ENCODE measurements at regions of chr11 and their contacts with region 1.

Region 1: GRCh38 chr11:13210424-13210823 is 67.2 kb upstream of the BMAL1 start:
- DNase-seq: peak; percentile 62
- H3K4me3 Mint-ChIP-seq: no peak overlapping the region
- H3K27ac Mint-ChIP-seq: no peak overlapping the region
- H3K4me1 Mint-ChIP-seq: peaks cover 39% of the 10 kb centered on the region
- H3K27me3 Mint-ChIP-seq: no peaks in the 10 kb centered on the region

Region 2: DNA sequence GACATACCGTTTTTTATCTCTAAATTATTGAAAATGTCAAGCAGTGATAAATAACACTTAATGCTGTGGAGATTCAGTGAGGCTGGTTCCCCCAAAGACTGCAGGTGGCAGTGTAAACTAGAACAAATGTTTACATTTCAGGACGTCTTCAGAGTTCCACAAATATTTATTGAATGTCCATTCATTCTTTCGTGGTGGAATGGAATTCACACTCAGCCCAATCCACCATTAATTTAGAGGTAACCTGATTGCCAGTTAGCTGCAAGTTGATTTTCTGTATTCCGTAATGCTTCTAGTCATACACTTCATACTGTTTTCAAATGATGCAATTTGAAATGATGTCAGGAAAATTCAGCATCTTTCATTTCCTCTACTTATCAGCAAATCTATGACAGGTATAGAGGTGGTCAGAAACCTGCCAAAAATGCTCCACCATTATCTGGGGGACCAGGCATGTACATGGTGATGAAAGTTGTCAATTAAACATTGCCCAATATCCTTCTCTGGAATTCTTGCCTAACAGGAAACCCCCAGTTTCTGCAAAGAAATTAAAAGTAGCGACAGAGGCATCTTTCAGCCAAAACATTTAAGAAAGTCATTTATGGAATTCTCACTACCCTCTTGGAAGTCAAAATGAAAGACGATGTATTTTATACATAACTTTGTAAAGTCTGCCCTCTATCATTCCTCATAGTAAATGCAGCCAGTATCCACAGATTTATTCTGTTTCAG is 27.2 kb before region 1 on chr11:
- CTCF ChIA-PET with region 1: interaction called, 10 read pairs
- intact Hi-C with region 1: loop called (anchors 1 kb)
- DNase-seq: peak; percentile 13
- H3K4me3 Mint-ChIP-seq: no peak overlapping the region
- H3K27ac Mint-ChIP-seq: no peak overlapping the region
- H3K4me1 Mint-ChIP-seq: peaks cover 6% of the 10 kb centered on the region
- H3K27me3 Mint-ChIP-seq: peaks cover 9% of the 10 kb centered on the region

Region 3: GRCh38 chr11:13238879-13239514 is 28.6 kb after region 1 on chr11:
- CTCF ChIA-PET with region 1: interaction called, 10 read pairs
- intact Hi-C with region 1: loop called (anchors 1 kb)
- DNase-seq: peak; percentile 70
- H3K4me3 Mint-ChIP-seq: no peak overlapping the region
- H3K27ac Mint-ChIP-seq: no peak overlapping the region
- H3K4me1 Mint-ChIP-seq: no peaks in the 10 kb centered on the region
- H3K27me3 Mint-ChIP-seq: no peaks in the 10 kb centered on the region

Region 4: DNA sequence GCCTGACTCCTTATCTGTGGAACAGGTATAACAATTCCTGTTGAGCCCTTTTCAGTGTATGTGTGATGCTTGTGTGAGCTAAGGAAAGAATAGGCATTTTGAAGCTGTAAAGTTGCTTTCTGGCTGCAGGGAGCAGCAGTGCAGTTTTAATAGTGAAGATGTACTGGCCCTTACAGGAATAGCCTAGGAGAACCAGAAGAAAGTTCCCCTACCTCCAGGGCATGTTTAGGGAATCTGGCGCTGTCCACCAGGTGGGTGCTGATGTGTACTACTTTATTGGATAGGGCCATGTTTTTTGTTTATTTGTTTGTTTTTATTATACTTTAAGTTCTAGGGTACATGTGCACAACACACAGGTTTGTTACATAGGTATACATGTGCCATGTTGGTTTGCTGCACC is 78.7 kb after region 1 on chr11:
- CTCF ChIA-PET with region 1: interaction called, 4 read pairs
- intact Hi-C with region 1: loop called (anchors 1 kb)
- DNase-seq: no peak
- H3K4me3 Mint-ChIP-seq: no peak overlapping the region
- H3K27ac Mint-ChIP-seq: no peak overlapping the region
- H3K4me1 Mint-ChIP-seq: peaks cover 76% of the 10 kb centered on the region
- H3K27me3 Mint-ChIP-seq: no peaks in the 10 kb centered on the region

Region 5: GRCh38 chr11:13343931-13344717 is 133.7 kb after region 1 on chr11:
- CTCF ChIA-PET with region 1: interaction called, 12 read pairs
- intact Hi-C with region 1: loop called (anchors 1 kb)
- DNase-seq: peak; percentile 89
- H3K4me3 Mint-ChIP-seq: no peak overlapping the region
- H3K27ac Mint-ChIP-seq: no peak overlapping the region
- H3K4me1 Mint-ChIP-seq: peaks cover 41% of the 10 kb centered on the region
- H3K27me3 Mint-ChIP-seq: no peaks in the 10 kb centered on the region

Region 6: DNA sequence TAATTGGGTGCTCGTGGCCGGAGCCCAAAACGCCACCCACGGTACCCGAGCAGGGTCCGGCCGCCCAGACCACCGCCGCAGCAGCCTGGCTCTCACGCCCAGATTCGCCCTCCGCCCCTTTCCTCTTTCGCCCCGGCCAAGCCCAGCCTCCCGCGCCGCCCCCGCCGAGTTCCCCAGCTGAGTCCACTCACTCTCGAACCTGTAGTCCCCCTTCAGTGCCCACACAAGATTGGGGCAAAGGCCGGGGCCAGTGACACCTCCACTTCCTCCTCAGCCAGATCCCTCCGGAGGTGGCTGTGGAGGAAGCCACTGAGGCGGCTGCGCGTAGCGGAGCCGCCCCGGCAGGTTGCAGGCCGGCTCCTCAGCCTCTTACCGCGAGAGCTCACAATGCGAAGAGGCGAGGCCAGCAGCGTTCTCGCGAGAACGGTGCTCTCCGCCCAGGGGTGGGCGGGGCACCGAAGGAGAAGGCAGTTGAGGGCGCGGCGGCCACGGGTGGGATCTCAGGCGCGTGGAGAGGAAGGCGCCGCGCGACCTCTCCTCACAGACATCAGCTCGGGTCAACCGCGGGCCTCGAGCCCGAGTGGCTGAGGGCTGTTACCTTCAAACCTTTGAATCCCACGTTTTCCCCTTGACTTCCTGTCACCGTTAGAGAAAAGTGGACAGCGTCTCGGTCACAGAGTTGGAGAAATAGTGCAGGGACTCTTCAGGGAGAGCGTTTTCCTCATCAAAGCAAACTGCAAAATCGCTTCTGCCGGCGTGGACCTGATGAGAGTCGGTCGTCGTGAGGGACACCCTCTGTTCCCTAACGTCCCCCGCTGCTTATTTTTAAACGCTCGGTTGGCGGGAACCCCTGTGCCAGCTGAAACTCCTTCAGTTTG is 252.7 kb after region 1 on chr11 and contains the start of gene BTBD10:
- CTCF ChIA-PET with region 1: no interaction called
- intact Hi-C with region 1: loop called (anchors 1 kb)
- DNase-seq: peak; percentile 94
- H3K4me3 Mint-ChIP-seq: peak within 1 kb of the TSS; percentile 99
- H3K27ac Mint-ChIP-seq: peak within 1 kb of the TSS; percentile 96
- H3K4me1 Mint-ChIP-seq: peaks cover 33% of the 10 kb centered on the region
- H3K27me3 Mint-ChIP-seq: no peaks in the 10 kb centered on the region
- total RNA-seq, gene BTBD10: 20.9 to 21.0 TPM

Measured in activated naive CD4-positive, alpha-beta T cell treated with anti-CD3 and anti-CD28 coated beads for 36 hours (primary cell).